ENCODE measurements at regions of chr1 and their contacts with region 1.

Region 1: GRCh38 chr1:48817505-48818114 is 40.9 kb upstream of the BEND5 start:
- DNase-seq: peak; percentile 72
- H3K4me3 Mint-ChIP-seq: no peak overlapping the region
- H3K27ac Mint-ChIP-seq: no peak overlapping the region
- H3K4me1 Mint-ChIP-seq: no peaks in the 10 kb centered on the region
- H3K27me3 Mint-ChIP-seq: no peaks in the 10 kb centered on the region
- CTCF ChIP-seq: peak; percentile 62

Region 2: DNA sequence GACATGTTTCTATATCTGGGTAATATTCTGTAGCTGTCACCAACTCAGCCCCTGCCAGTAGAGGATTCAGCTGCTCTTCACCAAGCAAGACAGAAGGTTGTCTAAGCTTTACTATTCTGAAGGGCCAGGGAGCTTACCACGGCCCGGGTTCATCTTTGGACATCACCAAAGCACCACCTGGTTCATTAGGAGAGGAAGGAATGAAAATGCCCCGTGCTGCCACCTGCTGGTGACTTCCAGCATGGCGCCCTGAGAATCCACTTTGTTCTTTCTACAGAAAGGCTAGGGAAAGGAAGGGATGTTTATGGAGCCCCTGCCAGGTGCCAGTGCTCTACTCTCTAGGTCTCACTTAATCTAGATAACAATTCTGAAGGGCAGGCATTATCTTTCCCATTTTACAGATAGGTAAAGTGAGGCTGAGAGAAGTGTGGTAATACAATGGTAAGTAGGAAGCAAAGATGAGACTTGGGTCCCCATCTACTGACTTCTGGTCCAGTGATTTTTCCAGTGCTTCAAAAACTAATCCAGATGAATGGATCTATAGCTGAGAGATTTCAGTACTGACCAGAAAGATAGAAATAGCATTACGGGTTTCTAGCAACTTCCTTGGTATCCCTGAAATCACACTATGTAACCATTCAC is 120.4 kb before region 1 on chr1:
- CTCF ChIA-PET with region 1: interaction called, 19 read pairs
- POLR2A ChIA-PET with region 1: no interaction called
- intact Hi-C with region 1: no loop called
- DNase-seq: peak; percentile 68
- H3K4me3 Mint-ChIP-seq: no peak overlapping the region
- H3K27ac Mint-ChIP-seq: no peak overlapping the region
- H3K4me1 Mint-ChIP-seq: peaks cover 10% of the 10 kb centered on the region
- H3K27me3 Mint-ChIP-seq: peaks cover 16% of the 10 kb centered on the region
- CTCF ChIP-seq: peak; percentile 81